ENCODE measurements at regions of chr11 and their contacts with region 1.

Region 1: DNA sequence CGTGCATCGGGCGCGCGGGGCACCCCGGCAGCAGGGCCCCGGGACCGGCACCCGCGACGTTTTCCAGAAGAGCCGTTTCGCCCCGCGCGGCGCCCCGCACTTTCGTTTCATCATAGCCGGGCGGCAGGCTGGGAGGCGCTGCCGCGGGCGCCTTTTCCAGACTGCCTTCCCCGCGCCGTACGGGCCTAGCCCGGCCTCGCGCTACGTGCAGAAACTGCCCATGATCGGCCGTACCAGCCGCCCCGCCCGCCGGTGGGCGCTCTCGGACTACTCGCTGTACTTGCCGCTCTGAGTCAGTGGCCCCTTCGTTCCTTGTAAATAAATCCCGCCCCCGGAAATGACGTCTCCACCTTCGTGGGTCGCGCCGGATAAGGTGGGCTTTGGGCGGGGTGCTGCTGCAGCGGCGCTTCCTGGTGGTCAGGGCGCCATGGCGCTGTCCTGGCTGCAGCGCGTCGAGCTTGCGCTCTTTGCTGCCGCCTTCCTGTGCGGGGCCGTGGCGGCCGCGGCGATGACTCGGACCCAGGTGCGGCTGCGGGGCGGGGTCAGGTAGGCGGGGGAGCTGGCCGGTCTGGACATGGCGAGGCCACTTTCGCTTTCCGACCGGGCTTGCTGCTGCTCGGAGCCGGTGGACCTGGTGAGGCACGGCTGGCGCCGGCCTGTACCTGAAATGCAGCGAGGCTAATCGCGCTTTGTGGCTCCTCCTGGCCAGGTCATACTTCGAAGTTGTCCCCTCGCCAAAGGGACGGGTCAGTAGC is at the start of gene TMEM179B:
- DNase-seq: peak; percentile 94 to 99
- ATAC-seq: peak; percentile 86 to 92 (median 89)
- H3K4me3 ChIP-seq: peak within 1 kb of the TSS; percentile 87 to 96 (median 92)
- H3K27ac ChIP-seq: peak within 1 kb of the TSS; percentile 91 to 99 (median 97)
- H3K4me1 ChIP-seq: peaks cover 10 to 54% (median 49%) of the 10 kb centered on the region in 9 donors
- H3K27me3 ChIP-seq: no peaks in the 10 kb centered on the region
- CTCF ChIP-seq: peak in 8 of 9 donors; percentile 4 to 60 (median 38)
- total RNA-seq, gene TMEM179B: 9.4 to 27.2 (median 17.4) TPM

Region 2: GRCh38 chr11:62217191-62217748 is 569.9 kb before region 1 on chr11:
- intact Hi-C with region 1: no loop called
- DNase-seq: no peak
- ATAC-seq: no peak
- H3K4me3 ChIP-seq: no peak overlapping the region
- H3K27ac ChIP-seq: no peak overlapping the region
- H3K4me1 ChIP-seq: no peaks in the 10 kb centered on the region
- H3K27me3 ChIP-seq: peaks cover 0 to 13% (median 2%) of the 10 kb centered on the region in 7 donors
- CTCF ChIP-seq: peak in 4 of 9 donors; percentile 14 to 42 (median 28)

Region 3: DNA sequence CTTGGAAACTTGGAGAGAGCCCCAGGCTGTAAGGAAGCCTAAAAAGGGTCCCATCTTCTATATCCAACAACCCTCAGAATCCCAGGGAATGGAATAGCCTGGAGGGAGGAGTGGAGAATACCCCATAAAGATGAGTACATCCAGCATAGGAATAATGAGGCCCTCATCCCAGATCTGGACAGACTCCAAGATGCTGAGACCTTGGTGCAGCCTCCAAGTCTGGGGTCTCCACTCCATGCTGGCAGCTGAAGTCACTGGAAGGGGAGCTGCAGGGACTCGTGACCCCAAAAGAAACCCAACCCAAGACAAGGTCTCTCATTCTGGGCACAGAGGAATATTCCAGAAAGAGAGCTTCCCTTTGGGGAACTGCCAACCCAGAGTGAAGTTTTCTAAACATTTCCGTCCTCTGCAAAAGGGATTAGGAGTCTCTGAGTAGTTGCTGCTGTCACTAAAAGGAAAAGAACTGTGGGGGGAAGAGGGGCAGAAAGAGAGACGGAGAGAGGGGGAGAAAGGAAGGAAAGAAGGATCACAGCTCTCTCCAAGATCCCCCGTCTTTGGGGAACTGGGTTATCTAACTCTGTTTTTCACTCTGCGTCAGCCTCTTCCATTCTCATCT is 367.8 kb before region 1 on chr11:
- intact Hi-C with region 1: no loop called
- DNase-seq: no peak
- ATAC-seq: peak in 4 of 8 donors; percentile 38 to 52 (median 48)
- H3K4me3 ChIP-seq: no peak overlapping the region
- H3K27ac ChIP-seq: peak overlapping the region in 9 of 10 donors; percentile 5 to 77 (median 46)
- H3K4me1 ChIP-seq: peaks cover 0 to 18% (median 10%) of the 10 kb centered on the region in 9 donors
- H3K27me3 ChIP-seq: no peaks in the 10 kb centered on the region
- CTCF ChIP-seq: no peak

Region 4: GRCh38 chr11:62757846-62758788 is 29.1 kb before region 1 on chr11:
- intact Hi-C with region 1: no loop called
- DNase-seq: no peak
- ATAC-seq: no peak
- H3K4me3 ChIP-seq: no peak overlapping the region
- H3K27ac ChIP-seq: no peak overlapping the region
- H3K4me1 ChIP-seq: peaks cover 10 to 29% (median 24%) of the 10 kb centered on the region in 9 donors
- H3K27me3 ChIP-seq: no peaks in the 10 kb centered on the region
- CTCF ChIP-seq: no peak

Region 5: GRCh38 chr11:62831520-62832335 is 44.5 kb after region 1 on chr11 and contains the start of gene STX5:
- intact Hi-C with region 1: loop called in 7 of 10 experiments (anchors 5 to 10 kb)
- DNase-seq: peak; percentile 99 to 100
- ATAC-seq: peak; percentile 98 to 99 (median 98)
- H3K4me3 ChIP-seq: peak within 1 kb of the TSS; percentile 65 to 99 (median 88)
- H3K27ac ChIP-seq: peak within 1 kb of the TSS; percentile 82 to 97 (median 94)
- H3K4me1 ChIP-seq: peaks cover 8 to 49% (median 44%) of the 10 kb centered on the region in 9 donors
- H3K27me3 ChIP-seq: no peaks in the 10 kb centered on the region
- CTCF ChIP-seq: no peak
- total RNA-seq, gene STX5: 16.8 to 27.0 (median 19.0) TPM

Region 6: DNA sequence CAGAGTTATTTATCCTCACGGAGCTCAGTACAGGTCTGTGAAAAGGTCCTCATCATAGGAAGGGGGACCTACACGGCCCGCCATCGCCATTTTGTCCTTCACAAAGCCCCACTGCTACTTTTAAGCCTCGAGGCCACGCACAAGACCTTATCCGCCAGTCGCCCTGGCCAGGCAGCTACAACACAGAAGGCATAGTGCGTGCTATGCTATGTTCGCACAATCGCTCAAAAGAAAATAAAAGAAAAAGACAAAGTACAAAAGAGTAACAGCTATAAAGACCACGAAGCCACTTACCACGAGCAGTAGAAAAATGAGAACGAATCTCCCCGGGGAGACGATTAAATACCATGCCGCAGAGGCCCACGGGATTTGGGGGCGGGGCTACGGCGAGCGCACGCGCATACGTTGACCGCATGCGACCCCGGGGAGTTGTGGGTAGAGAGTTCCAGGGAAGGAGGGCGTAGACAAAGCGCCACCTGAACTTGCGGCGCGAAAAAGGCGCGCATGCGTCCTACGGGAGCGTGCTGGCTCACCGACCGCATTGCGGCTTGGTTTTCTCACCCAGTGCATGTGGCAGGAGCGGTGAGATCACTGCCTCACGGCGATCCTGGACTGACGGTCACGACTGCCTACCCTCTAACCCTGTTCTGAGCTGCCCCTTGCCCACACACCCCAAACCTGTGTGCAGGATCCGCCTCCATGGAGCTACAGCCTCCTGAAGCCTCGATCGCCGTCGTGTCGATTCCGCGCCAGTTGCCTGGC is 68.6 kb after region 1 on chr11:
- intact Hi-C with region 1: loop called in 7 of 10 experiments (anchors 5 to 10 kb)
- DNase-seq: peak; percentile 96
- ATAC-seq: peak; percentile 97 to 99 (median 99)
- H3K4me3 ChIP-seq: peak overlapping the region; percentile 51 to 98 (median 68)
- H3K27ac ChIP-seq: peak overlapping the region; percentile 1 to 88 (median 77)
- H3K4me1 ChIP-seq: peaks cover 12 to 49% (median 29%) of the 10 kb centered on the region in 9 donors
- H3K27me3 ChIP-seq: no peaks in the 10 kb centered on the region
- CTCF ChIP-seq: no peak

Region 7: GRCh38 chr11:62860835-62861563 is 73.8 kb after region 1 on chr11:
- intact Hi-C with region 1: loop called (anchors 1 to 10 kb)
- DNase-seq: no peak
- ATAC-seq: no peak
- H3K4me3 ChIP-seq: no peak overlapping the region
- H3K27ac ChIP-seq: no peak overlapping the region
- H3K4me1 ChIP-seq: peaks cover 0 to 24% (median 6%) of the 10 kb centered on the region in 9 donors
- H3K27me3 ChIP-seq: no peaks in the 10 kb centered on the region
- CTCF ChIP-seq: no peak

Measured in heart right ventricle (tissue), 16 donors.